Left lung (tissue), 14 donors: ENCODE measurements at regions of chr1 and their contacts with region 1.

Region 1: GRCh38 chr1:24830680-24831272 is 85.5 kb downstream of the CLIC4 start:
- DNase-seq: peak in 2 of 4 donors; percentile 64 to 77
- ATAC-seq: peak; percentile 93
- H3K4me3 ChIP-seq: no peak overlapping the region
- H3K27ac ChIP-seq: no peak overlapping the region
- H3K4me1 ChIP-seq: peaks cover 7 to 49% of the 10 kb centered on the region in 2 donors
- H3K27me3 ChIP-seq: no peaks in the 10 kb centered on the region
- CTCF ChIP-seq: peak; percentile 48 to 76

Region 2: DNA sequence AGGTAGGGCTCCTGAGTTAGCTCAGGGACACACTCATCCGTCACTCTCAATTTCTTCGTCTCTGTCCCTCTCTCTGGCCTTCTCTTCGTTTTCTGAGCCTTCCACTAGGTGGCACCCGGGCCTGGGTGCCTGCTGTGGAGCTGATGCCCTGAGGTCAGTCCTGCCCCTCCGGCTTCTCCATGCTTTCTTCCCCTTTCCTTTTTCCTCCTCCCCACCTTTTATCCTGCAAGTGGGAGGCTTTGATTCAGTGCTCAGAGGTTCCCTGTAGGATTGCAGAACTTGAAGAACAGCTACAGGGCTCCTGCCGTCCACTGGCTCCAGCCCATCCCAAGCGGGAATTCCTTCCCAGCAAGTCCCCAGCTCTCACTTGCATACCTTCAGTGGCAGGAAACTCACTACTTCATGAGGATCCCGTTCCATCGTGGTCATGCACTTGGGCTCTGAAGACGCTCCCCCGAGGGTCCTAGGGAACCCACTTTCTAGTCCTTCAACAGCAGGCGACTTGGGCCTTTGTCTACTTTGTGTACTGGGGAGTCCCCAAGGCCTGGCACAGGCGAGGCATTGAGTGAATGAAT is 142.1 kb before region 1 on chr1:
- intact Hi-C with region 1: loop called (anchors 10 kb)
- DNase-seq: peak; percentile 66 to 86 (median 74)
- ATAC-seq: peak; percentile 96
- H3K4me3 ChIP-seq: no peak overlapping the region
- H3K27ac ChIP-seq: no peak overlapping the region
- H3K4me1 ChIP-seq: peaks cover 0 to 14% of the 10 kb centered on the region in 2 donors
- H3K27me3 ChIP-seq: no peaks in the 10 kb centered on the region
- CTCF ChIP-seq: peak; percentile 77 to 81

Region 3: GRCh38 chr1:24754229-24754628 is 76.5 kb before region 1 on chr1:
- intact Hi-C with region 1: loop called in 1 of 2 experiments (anchors 5 kb)
- DNase-seq: no peak
- ATAC-seq: no peak
- H3K4me3 ChIP-seq: no peak overlapping the region
- H3K27ac ChIP-seq: peak overlapping the region in 1 of 2 donors; percentile 7
- H3K4me1 ChIP-seq: peaks cover 8 to 55% of the 10 kb centered on the region in 2 donors
- H3K27me3 ChIP-seq: no peaks in the 10 kb centered on the region
- CTCF ChIP-seq: no peak